Psoas muscle (tissue), 8 donors: ENCODE measurements at regions of chr17 and their contacts with region 1.

Region 1: DNA sequence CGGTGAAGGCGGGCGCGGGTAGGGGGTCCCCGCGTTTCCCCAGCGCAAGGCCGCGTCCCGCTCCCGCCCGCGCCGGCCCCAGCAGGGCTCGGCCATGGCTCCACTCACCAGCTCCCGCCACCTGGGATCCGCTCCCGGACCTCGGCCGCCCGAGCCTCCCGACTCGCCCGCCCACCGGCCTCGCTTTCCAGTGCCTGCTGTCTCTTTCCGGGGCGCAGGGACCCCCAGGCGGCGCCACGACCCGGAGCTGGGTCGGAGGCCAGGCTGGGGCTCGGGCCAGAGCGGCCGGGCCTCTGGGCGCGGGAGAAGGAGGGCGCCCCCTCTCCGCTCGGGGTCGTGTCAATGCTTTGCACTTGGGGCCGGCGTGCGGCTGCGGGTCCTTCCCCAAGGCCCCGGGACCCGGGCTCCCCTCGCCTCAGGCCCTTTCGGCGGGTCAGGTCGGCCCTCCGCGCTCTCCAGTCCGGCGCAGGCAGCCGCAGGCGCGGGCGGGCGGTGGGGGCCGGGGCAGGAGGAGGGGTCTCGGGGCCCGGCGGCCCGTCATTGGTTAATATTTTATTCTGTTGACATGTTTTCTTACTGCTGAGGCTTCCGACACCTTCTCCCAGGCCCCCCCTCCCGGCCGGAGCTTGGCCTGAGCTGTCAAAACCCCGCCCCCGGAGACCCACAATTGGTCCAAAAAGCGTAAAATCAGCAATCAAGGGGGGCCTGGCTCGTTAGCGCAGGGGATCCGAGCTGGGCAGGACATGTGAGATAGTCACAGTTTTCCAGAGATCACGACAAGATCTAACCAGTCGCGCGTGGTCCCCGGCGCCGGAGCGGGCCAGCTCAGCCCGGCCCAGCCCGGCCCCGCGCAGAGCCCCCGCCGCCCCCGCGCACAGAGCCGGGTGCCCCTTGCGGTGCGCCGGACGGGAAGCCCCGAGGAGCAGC is at the start of gene TBX2:
- DNase-seq: peak; percentile 64 to 71
- ATAC-seq: peak in 3 of 4 donors; percentile 15 to 33 (median 24)
- H3K4me3 ChIP-seq: peak within 1 kb of the TSS; percentile 77
- H3K27ac ChIP-seq: peak within 1 kb of the TSS; percentile 61
- H3K4me1 ChIP-seq: peaks cover 24% of the 10 kb centered on the region
- H3K27me3 ChIP-seq: peaks cover 2 to 86% (median 54%) of the 10 kb centered on the region in 3 donors
- CTCF ChIP-seq: no peak
- total RNA-seq, gene TBX2: 6.3 to 8.7 (median 8.7) TPM

Region 2: DNA sequence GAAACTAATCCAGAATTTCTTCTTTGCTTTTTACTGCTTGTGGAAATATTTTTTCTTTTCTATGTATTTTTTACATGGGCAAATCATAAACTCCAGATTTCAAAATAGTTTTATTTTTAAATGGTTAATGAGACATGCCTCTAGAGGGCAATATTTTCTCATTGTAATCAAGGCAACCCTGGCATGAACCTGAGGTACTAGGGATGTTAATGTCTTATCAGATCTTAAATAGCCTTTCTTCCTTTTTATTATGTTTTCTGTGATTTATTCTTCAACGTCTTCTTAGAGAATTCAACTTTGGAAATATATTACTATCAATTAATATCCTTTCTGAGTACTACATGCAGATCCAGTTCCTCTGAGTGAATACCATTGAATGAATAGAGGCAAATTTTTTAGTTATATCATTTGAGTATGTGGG is 397.1 kb before region 1 on chr17:
- intact Hi-C with region 1: loop called (anchors 5 to 10 kb)
- DNase-seq: no peak
- ATAC-seq: peak in 1 of 4 donors; percentile 50
- H3K4me3 ChIP-seq: no peak overlapping the region
- H3K27ac ChIP-seq: no peak overlapping the region
- H3K4me1 ChIP-seq: no peaks in the 10 kb centered on the region
- H3K27me3 ChIP-seq: no peaks in the 10 kb centered on the region
- CTCF ChIP-seq: peak; percentile 48